Posterior vena cava (tissue), 2 donors: ENCODE measurements at regions of chrX and their contacts with region 1.

Region 1: GRCh38 chrX:17689971-17690409 is 47.3 kb upstream of the SCML1 start:
- DNase-seq: no peak

Region 2: DNA sequence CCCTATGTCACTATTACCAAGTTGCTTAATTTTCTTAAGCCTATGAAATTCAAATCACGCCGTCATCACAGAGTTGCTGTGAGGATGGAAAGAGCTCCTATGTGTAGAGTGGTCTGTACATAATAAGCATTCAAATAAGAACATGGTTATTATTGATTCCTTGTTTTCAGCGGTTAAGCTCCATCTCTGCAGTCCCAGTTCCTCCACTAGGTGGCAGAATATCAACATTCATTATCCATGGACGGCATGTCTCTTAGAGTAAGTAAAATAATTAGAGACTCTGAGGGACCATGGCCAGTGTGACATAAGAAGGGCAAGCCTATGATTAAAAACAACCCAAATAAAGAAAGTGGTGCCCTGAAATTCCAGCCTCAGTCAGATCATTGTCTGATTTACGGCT is 447.5 kb before region 1 on chrX:
- intact Hi-C with region 1: loop called in 1 of 2 experiments (anchors 5 kb)
- DNase-seq: no peak

Region 3: GRCh38 chrX:17278961-17279360 is 411.0 kb before region 1 on chrX:
- intact Hi-C with region 1: no loop called
- DNase-seq: no peak